Cardiac septum (tissue), 1 donor: ENCODE measurements at regions of chr13 and their contacts with region 1.

Region 1: GRCh38 chr13:43132257-43132656 is 108.9 kb downstream of the DNAJC15 start:
- DNase-seq: no peak

Region 2: DNA sequence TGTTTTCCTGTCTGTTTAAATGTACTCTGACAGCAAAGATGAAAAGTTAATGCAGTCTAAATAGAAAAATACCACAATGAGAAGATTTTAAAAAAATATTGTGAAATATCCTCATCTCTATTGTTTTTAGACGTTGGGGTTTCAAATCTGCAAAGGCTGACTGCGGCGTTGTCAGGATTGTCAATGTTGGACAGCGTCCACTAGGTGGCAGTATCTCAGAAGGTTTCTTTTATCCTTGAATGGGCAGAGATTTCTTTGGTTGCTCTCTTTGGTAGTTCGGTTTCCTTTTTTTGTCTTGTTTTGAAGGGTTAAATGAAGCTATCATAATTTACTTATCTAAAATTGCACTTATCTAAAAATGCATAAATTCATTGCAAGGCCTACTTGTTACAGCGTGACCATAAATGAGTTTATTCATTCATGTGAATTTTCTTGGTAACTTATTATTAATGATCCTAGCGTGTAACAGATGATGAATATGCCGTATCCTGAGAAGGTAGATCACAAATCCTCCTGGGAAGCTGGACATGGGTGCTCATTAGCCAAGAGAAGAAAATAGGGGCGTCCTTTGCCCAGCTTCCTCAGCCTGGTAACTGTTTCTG is 537.2 kb before region 1 on chr13:
- intact Hi-C with region 1: loop called (anchors 10 kb)
- DNase-seq: no peak

Region 3: GRCh38 chr13:43036351-43037250 is 95.7 kb before region 1 on chr13:
- intact Hi-C with region 1: loop called (anchors 5 kb)
- DNase-seq: peak; percentile 90